Activated CD8-positive, alpha-beta T cell treated with anti-CD3 and anti-CD28 coated beads, Interleukin-2, amount 10 ng/mL, durations not matched to agents 7 days and 5 days (primary cell): ENCODE measurements at regions of chr19 and their contacts with region 1.

Region 1: GRCh38 chr19:51441410-51442390 is 16.6 kb downstream of the SIGLEC8 start:
- DNase-seq: peak; percentile 97
- ATAC-seq: peak; percentile 92
- H3K4me3 Mint-ChIP-seq: peak overlapping the region; percentile 71
- H3K27ac Mint-ChIP-seq: peak overlapping the region; percentile 74
- H3K4me1 Mint-ChIP-seq: peaks cover 49% of the 10 kb centered on the region
- H3K27me3 Mint-ChIP-seq: peaks cover 38% of the 10 kb centered on the region

Region 2: GRCh38 chr19:51422053-51422448 is 19.6 kb before region 1 on chr19:
- CTCF ChIA-PET with region 1: interaction called, 74 read pairs
- POLR2A ChIA-PET with region 1: no interaction called
- DNase-seq: peak; percentile 91
- ATAC-seq: peak; percentile 81
- H3K4me3 Mint-ChIP-seq: no peak overlapping the region
- H3K27ac Mint-ChIP-seq: no peak overlapping the region
- H3K4me1 Mint-ChIP-seq: peaks cover 17% of the 10 kb centered on the region
- H3K27me3 Mint-ChIP-seq: peaks cover 21% of the 10 kb centered on the region